ENCODE measurements at regions of chr2 and their contacts with region 1.

Region 1: DNA sequence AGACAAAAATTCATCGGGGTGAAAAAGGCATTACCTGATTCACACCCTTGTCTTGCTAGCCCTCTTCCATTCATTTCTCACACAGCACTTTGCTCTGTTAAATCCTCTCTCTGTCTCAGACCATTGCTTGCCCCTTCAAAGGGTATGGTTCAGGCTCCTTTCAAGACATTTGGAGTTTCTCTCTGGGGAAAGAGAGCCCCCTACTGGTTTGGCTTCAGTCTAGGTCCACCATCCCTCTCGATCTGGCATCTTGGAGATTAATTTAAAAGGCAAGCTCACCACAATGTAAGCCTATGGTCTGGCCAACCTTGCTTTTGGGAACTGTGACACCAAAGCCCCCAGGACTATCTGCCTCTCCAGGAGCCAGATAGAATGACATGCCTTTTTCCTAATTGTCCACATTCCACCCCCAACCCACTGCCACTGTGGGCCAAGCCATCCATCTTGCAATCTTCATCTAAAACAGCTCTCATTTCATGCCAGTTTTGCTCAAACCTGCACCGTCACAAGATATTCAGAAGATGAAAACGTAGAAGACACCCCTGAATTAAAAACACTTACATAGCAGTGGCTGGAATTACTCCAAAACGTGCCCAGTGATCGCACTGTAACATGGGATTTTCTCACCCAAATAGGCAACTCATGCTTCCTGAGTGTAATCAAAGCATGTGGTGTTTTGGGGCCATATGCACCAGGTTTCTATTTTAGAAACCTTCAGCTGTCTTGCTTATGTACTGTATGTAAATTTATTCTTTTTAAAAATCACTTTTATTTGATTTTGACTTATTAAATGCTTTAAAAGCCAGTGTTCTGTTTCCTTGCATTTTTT is 93.9 kb downstream of the FARSB start:
- DNase-seq: peak; percentile 83
- H3K4me3 Mint-ChIP-seq: no peak overlapping the region
- H3K27ac Mint-ChIP-seq: no peak overlapping the region
- H3K4me1 Mint-ChIP-seq: peaks cover 2% of the 10 kb centered on the region
- H3K27me3 Mint-ChIP-seq: no peaks in the 10 kb centered on the region

Region 2: DNA sequence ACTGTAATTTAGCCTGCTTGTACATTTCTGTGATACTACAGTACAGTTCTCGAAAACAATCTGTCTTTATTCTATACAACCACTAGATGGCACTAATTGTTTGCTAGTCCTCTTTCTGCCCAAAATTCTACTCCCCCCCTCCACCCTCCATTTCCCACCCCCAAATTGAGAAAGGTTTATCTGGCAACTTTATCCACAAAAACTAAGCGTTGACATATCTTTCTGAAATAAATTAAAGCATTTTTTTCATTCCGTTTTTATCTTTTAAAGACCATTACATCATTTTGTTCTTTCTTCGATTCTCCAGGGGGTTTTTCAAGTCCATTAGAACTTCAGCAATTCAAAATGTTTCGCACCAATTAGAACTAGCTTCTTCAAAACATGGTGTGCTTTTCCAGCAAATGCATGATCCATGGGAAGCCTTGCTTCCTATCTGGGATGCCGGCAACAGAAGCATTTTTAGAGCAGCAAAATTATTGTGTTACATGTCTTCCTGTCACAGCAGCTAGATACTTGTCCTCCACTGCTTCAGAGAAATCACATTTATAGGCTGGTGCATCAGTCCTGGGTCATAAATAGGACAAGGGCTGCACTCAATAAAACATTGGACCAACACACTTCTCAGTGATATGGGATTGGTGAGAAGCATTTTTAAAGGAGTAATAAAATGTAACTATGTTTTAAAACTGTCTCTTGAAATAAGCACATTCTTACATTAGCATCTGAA is 504.5 kb before region 1 on chr2:
- intact Hi-C with region 1: loop called (anchors 5 kb)
- DNase-seq: no peak
- H3K4me3 Mint-ChIP-seq: no peak overlapping the region
- H3K27ac Mint-ChIP-seq: no peak overlapping the region
- H3K4me1 Mint-ChIP-seq: no peaks in the 10 kb centered on the region
- H3K27me3 Mint-ChIP-seq: peaks cover 19% of the 10 kb centered on the region

Region 3: GRCh38 chr2:222433332-222434173 is 128.5 kb before region 1 on chr2:
- intact Hi-C with region 1: no loop called
- DNase-seq: no peak
- H3K4me3 Mint-ChIP-seq: no peak overlapping the region
- H3K27ac Mint-ChIP-seq: no peak overlapping the region
- H3K4me1 Mint-ChIP-seq: peaks cover 11% of the 10 kb centered on the region
- H3K27me3 Mint-ChIP-seq: no peaks in the 10 kb centered on the region

Region 4: GRCh38 chr2:222688917-222689316 is 126.9 kb after region 1 on chr2:
- intact Hi-C with region 1: no loop called
- DNase-seq: no peak
- H3K4me3 Mint-ChIP-seq: no peak overlapping the region
- H3K27ac Mint-ChIP-seq: no peak overlapping the region
- H3K4me1 Mint-ChIP-seq: peaks cover 12% of the 10 kb centered on the region
- H3K27me3 Mint-ChIP-seq: peaks cover 12% of the 10 kb centered on the region